ENCODE measurements at regions of chr19 and their contacts with region 1.

Region 1: GRCh38 chr19:12610540-12611360 is at the starts of genes ZNF490 and ZNF791:
- DNase-seq: peak; percentile 98
- H3K4me3 Mint-ChIP-seq: peak within 1 kb of the TSS; percentile 100
- H3K27ac Mint-ChIP-seq: peak within 1 kb of the TSS; percentile 99
- H3K4me1 Mint-ChIP-seq: peaks cover 26% of the 10 kb centered on the region
- H3K27me3 Mint-ChIP-seq: no peaks in the 10 kb centered on the region
- total RNA-seq, gene ZNF490: 6.9 to 7.0 TPM
- total RNA-seq, gene ZNF791: 18.2 to 19.1 TPM

Region 2: DNA sequence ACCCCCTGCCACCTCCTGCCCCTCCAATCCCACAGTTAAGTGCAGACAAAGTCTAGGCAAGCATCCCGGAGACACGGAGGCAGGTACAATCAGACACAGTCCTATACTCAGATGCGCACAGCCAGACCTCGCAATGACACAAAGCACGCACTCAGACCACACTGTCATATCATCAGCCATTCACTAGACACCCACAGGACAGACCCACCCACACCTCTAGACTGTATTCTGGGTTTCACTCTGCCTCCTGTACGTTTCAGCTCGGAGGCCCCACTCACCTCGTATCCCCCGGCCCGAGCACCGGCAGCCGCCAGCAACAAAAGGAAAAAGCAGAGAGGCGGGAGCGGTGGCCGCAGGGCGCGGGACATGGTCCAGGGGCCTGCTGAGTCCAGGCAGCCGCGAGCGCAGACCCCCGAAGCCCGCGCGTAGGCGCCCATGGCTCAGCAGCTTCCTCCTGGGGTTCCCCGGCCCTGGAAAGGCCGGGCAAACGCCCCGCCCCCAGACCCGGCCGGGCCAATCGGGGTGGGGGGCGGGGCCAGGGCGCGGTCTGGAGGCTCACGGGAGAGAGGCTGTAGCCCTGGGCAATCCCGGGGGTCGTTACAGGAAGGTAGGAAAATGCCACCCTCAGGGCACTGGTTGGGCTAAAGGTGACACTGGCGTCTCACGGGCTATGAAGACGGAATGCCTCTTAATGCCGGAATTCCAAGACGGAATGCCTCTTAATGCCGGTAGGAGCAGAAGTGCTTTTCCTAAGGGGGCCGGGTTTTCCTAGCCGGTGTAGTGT is 55.7 kb after region 1 on chr19 and contains the starts of genes MAN2B1 and WDR83:
- CTCF ChIA-PET with region 1: interaction called, 5 read pairs
- POLR2A ChIA-PET with region 1: interaction called, 3 read pairs
- intact Hi-C with region 1: loop called (anchors 1 kb)
- DNase-seq: peak; percentile 87
- H3K4me3 Mint-ChIP-seq: peak within 1 kb of the TSS; percentile 87
- H3K27ac Mint-ChIP-seq: peak within 1 kb of the TSS; percentile 87
- H3K4me1 Mint-ChIP-seq: peaks cover 47% of the 10 kb centered on the region
- H3K27me3 Mint-ChIP-seq: no peaks in the 10 kb centered on the region
- total RNA-seq, gene MAN2B1: 123 to 127 TPM
- total RNA-seq, gene WDR83: 17.1 to 17.8 TPM

Measured in activated CD4-positive, alpha-beta memory T cell treated with anti-CD3 and anti-CD28 coated beads for 36 hours (primary cell).